ENCODE measurements at regions of chr12 and their contacts with region 1.

Region 1: DNA sequence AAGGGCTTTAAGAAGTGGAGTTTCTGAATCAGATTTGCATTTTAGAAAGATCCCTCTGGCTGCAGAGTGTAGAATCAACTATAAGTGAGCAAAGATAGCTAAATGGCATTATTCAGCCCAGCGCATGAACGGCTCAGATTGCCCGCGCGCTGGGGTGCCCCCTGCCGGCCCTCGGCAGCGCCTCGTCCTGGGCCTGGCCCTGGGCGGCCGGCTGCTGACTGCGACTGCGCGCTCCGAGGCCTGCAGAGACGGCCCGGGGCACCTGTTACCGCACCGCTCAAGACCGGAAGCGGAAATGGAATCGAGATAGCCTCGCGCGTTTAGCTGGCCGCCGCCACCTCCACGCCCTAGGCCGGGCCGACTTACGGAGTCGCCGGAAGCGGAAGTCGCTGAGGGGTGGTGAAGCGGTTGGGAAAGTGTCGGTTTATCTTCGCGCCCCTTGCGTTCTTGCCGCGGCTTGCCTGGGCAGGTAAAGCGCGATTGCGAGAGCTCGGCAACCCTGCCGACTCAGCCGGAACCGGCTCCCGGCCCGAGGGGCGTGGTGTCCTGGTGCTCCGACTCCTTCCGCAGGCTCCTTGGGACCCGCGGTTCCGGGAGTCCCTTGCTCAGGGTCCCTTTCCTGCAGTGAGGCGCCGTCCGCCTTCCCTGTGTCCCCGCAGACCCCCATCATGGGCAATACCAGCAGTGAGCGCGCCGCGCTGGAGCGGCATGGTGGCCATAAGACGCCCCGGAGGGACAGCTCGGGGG is at the start of gene PRKAB1:
- DNase-seq: peak; percentile 96
- H3K4me3 Mint-ChIP-seq: peak within 1 kb of the TSS; percentile 90
- H3K27ac Mint-ChIP-seq: peak within 1 kb of the TSS; percentile 95
- H3K4me1 Mint-ChIP-seq: peaks cover 52% of the 10 kb centered on the region
- H3K27me3 Mint-ChIP-seq: no peaks in the 10 kb centered on the region
- total RNA-seq, gene PRKAB1: 34.3 to 39.8 TPM

Region 2: GRCh38 chr12:118044075-118044474 is 1623.7 kb before region 1 on chr12:
- CTCF ChIA-PET with region 1: interaction called, 7 read pairs
- intact Hi-C with region 1: loop called (anchors 2 kb)
- DNase-seq: peak; percentile 38
- H3K4me3 Mint-ChIP-seq: no peak overlapping the region
- H3K27ac Mint-ChIP-seq: peak overlapping the region; percentile 84
- H3K4me1 Mint-ChIP-seq: peaks cover 50% of the 10 kb centered on the region
- H3K27me3 Mint-ChIP-seq: no peaks in the 10 kb centered on the region

Region 3: GRCh38 chr12:119876761-119877638 is 209.2 kb after region 1 on chr12 and contains the start of gene CIT:
- CTCF ChIA-PET with region 1: no interaction called
- intact Hi-C with region 1: loop called (anchors 1 kb)
- DNase-seq: peak; percentile 94
- H3K4me3 Mint-ChIP-seq: peak within 1 kb of the TSS; percentile 97
- H3K27ac Mint-ChIP-seq: peak within 1 kb of the TSS; percentile 42
- H3K4me1 Mint-ChIP-seq: peaks cover 13% of the 10 kb centered on the region
- H3K27me3 Mint-ChIP-seq: no peaks in the 10 kb centered on the region
- total RNA-seq, gene CIT: 78.6 to 78.8 TPM